Activated B cell treated with CpG ODN at 0.5 μM for 24 hours (primary cell): ENCODE measurements at regions of chr7 and their contacts with region 1.

Region 1: DNA sequence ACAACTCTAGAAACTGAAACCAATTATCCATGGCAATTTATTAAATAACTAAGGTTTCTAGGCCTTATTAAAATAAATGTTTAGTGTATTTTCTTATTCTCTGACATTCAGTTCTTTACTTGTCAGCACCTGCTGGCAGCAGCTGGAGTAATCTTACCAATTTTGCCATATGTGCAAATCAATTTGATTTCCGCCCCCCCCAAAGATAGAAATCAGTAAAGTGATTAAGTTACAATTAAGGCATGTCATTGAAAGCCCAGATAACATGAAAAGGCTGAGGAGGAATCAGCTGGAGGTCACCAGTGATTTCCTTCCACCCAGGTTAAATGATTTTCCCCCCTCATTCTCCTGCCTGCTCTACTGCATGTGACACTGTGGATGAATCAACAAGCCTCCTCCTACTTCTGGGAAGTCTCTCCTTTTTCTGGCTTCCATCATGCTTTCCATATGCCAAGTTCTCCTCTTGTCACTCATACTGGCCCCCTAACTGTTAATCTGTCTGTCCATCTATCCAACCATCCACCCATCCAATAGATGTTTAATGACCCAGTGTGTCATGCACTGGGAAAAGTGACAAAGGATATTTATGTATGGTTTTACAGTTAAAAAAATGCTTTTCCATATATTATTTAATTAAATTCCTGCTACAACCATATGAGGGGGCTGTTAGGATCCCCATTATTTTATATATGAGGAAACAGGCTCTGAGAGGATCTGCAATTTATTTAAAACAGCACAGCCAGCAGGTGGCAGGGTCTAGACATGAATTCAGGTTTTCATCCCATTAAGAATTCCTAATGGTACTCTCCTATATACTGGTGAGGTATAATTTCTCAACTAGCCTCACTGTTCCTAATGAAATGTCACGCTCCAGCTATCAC is 116.5 kb downstream of the ATXN7L1 start:
- DNase-seq: no peak
- ATAC-seq: no peak
- H3K4me3 Mint-ChIP-seq: no peak overlapping the region
- H3K27ac Mint-ChIP-seq: no peak overlapping the region
- H3K4me1 Mint-ChIP-seq: peaks cover 1% of the 10 kb centered on the region
- H3K27me3 Mint-ChIP-seq: no peaks in the 10 kb centered on the region
- CTCF ChIP-seq: peak; percentile 67

Region 2: GRCh38 chr7:105060437-105060836 is 699.5 kb before region 1 on chr7:
- CTCF ChIA-PET with region 1: no interaction called
- POLR2A ChIA-PET with region 1: no interaction called
- intact Hi-C with region 1: no loop called
- DNase-seq: no peak
- ATAC-seq: no peak
- H3K4me3 Mint-ChIP-seq: no peak overlapping the region
- H3K27ac Mint-ChIP-seq: no peak overlapping the region
- H3K4me1 Mint-ChIP-seq: peaks cover 40% of the 10 kb centered on the region
- H3K27me3 Mint-ChIP-seq: no peaks in the 10 kb centered on the region
- CTCF ChIP-seq: no peak

Region 3: DNA sequence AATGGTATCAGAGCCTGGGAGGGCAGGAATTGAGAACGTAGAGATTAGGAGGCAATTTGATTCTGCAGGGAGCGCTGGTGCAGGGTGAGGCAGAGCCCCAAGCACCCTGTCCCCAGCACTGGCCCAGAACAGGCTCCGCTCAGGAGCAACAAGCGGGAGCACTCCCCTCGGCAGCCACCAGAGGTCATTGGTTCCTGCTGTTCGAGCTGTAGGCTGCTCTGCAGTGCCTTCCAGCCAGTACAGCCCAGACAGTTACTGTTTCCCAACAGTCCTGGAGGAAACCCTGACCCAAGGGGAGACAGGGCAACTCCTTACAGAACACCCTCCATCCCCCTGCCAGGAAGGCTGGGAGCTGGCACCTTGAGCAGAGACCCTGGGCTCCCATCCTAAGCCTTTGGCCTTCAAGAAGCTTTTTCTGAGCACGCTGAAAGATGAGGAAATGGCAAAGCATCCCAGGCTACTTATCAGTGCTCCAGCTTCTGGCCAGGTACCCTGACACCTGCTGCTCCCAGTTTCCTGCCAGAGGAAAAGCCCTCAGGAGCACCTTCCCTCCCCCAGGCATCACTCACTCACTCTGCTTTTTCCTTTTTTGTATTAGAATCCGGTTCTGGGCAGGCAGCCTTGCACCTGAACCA is 107.4 kb before region 1 on chr7:
- CTCF ChIA-PET with region 1: interaction called, 19 read pairs
- POLR2A ChIA-PET with region 1: no interaction called
- intact Hi-C with region 1: loop called (anchors 1 kb)
- DNase-seq: peak; percentile 45
- ATAC-seq: peak; percentile 94
- H3K4me3 Mint-ChIP-seq: no peak overlapping the region
- H3K27ac Mint-ChIP-seq: no peak overlapping the region
- H3K4me1 Mint-ChIP-seq: peaks cover 2% of the 10 kb centered on the region
- H3K27me3 Mint-ChIP-seq: no peaks in the 10 kb centered on the region
- CTCF ChIP-seq: no peak

Region 4: DNA sequence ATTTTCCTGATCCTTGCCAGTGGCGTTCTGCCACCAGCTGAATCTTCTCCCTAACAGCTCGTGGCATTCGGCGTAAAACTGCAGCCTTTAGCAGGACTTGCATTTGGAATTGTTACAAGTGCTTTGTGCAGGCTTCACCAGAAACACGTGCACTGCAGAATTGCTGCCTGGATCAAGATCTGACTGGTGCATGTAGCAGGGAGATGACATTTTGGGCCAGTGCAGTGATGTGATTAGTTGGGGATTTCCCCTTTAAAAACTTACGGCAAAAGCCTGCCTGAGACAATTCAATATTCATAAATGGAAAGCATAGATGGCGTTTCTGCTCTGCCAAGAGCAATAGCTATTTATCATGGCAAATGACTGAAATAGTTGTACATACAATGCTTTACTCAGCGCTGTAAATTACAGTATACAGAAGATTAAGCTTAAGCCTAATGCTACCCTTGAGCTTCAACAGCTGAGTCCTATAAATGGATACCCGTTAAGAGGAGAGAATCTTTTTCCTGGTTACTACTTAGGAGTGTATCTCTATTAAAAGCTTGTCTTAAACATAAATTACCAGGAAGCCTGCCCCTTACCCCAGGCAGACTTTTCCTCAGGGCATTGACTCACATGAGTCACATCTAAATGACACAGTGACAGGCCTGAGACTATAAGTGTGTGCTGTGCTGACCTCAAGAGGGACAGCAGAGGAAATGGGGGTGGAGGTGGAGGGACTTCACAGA is 10.2 kb after region 1 on chr7:
- CTCF ChIA-PET with region 1: interaction called, 19 read pairs
- POLR2A ChIA-PET with region 1: interaction called, 3 read pairs
- intact Hi-C with region 1: no loop called
- DNase-seq: no peak
- ATAC-seq: peak; percentile 82
- H3K4me3 Mint-ChIP-seq: peak overlapping the region; percentile 66
- H3K27ac Mint-ChIP-seq: peak overlapping the region; percentile 80
- H3K4me1 Mint-ChIP-seq: peaks cover 49% of the 10 kb centered on the region
- H3K27me3 Mint-ChIP-seq: no peaks in the 10 kb centered on the region
- CTCF ChIP-seq: no peak

Region 5: GRCh38 chr7:106009403-106010226 is 249.7 kb after region 1 on chr7:
- CTCF ChIA-PET with region 1: interaction called, 34 read pairs
- POLR2A ChIA-PET with region 1: no interaction called
- intact Hi-C with region 1: loop called (anchors 1 kb)
- DNase-seq: peak; percentile 73
- ATAC-seq: peak; percentile 98
- H3K4me3 Mint-ChIP-seq: no peak overlapping the region
- H3K27ac Mint-ChIP-seq: no peak overlapping the region
- H3K4me1 Mint-ChIP-seq: peaks cover 22% of the 10 kb centered on the region
- H3K27me3 Mint-ChIP-seq: peaks cover 4% of the 10 kb centered on the region
- CTCF ChIP-seq: no peak

Region 6: GRCh38 chr7:106050011-106050745 is 290.3 kb after region 1 on chr7:
- CTCF ChIA-PET with region 1: interaction called, 124 read pairs
- POLR2A ChIA-PET with region 1: no interaction called
- intact Hi-C with region 1: no loop called
- DNase-seq: no peak
- ATAC-seq: no peak
- H3K4me3 Mint-ChIP-seq: no peak overlapping the region
- H3K27ac Mint-ChIP-seq: no peak overlapping the region
- H3K4me1 Mint-ChIP-seq: peaks cover 35% of the 10 kb centered on the region
- H3K27me3 Mint-ChIP-seq: no peaks in the 10 kb centered on the region
- CTCF ChIP-seq: no peak